ENCODE measurements at regions of chr11 and their contacts with region 1.

Region 1: DNA sequence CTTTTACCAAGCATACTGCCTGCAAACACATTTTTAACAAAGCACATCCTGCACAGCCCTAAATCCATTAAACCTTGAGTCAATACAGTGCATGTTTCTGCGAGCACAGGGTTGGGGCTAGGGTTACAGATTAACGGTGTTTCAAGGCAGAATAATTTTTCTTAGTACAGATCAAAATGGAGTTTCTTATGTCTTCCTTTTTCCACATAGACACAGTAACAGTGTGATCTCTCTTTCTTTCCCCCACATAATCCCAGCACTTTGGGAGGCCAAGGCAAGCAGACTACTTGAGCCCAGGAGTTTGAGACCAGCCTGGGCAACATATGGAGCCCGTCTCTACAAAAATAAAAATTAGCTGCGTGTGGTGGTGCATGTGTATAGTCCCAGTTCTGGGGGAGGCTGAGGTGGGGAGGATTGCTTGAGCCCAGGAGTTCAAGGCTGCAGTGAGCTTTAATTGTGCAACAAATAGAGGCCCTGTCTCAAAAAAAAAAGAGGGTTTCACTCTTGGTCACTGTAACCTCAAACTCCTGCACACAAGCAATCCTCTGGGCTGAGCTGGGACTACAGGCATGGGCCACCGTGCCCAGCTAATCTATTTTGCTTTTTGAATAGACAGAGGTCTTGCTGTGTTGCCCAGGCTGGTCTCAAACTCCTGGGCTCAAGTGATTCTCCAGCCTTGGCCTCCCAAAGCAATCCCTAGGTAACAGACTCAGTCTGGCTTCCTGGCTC is 19.7 kb upstream of the SLC3A2 start:
- DNase-seq: no peak
- H3K4me3 ChIP-seq: no peak overlapping the region
- H3K27ac ChIP-seq: no peak overlapping the region
- H3K4me1 ChIP-seq: peaks cover 8% of the 10 kb centered on the region
- H3K27me3 ChIP-seq: no peaks in the 10 kb centered on the region
- CTCF ChIP-seq: no peak

Region 2: DNA sequence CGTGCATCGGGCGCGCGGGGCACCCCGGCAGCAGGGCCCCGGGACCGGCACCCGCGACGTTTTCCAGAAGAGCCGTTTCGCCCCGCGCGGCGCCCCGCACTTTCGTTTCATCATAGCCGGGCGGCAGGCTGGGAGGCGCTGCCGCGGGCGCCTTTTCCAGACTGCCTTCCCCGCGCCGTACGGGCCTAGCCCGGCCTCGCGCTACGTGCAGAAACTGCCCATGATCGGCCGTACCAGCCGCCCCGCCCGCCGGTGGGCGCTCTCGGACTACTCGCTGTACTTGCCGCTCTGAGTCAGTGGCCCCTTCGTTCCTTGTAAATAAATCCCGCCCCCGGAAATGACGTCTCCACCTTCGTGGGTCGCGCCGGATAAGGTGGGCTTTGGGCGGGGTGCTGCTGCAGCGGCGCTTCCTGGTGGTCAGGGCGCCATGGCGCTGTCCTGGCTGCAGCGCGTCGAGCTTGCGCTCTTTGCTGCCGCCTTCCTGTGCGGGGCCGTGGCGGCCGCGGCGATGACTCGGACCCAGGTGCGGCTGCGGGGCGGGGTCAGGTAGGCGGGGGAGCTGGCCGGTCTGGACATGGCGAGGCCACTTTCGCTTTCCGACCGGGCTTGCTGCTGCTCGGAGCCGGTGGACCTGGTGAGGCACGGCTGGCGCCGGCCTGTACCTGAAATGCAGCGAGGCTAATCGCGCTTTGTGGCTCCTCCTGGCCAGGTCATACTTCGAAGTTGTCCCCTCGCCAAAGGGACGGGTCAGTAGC is 73.8 kb before region 1 on chr11 and contains the start of gene TMEM179B:
- intact Hi-C with region 1: loop called (anchors 5 kb)
- DNase-seq: peak; percentile 97
- H3K4me3 ChIP-seq: peak within 1 kb of the TSS; percentile 99
- H3K27ac ChIP-seq: peak within 1 kb of the TSS; percentile 100
- H3K4me1 ChIP-seq: peaks cover 68% of the 10 kb centered on the region
- H3K27me3 ChIP-seq: no peaks in the 10 kb centered on the region
- CTCF ChIP-seq: peak; percentile 29
- total RNA-seq, gene TMEM179B: 20.5 TPM